ENCODE measurements at regions of chr2 and their contacts with region 1.

Region 1: GRCh38 chr2:33583194-33583938 is 15.7 kb downstream of the FAM98A start:
- DNase-seq: peak; percentile 26
- ATAC-seq: peak; percentile 73
- H3K4me3 ChIP-seq: no peak overlapping the region
- H3K27ac ChIP-seq: 0 out of 2 replicates have a peak overlapping the region, but pooled peaks have one; percentile 6
- H3K4me1 ChIP-seq: peaks cover 3% of the 10 kb centered on the region; the same call in 1 of the 2 replicates
- H3K27me3 ChIP-seq: no peaks in the 10 kb centered on the region
- CTCF ChIP-seq: peak; percentile 72 to 85 (median 83)
- EP300 ChIP-seq: no peak
- POLR2A ChIP-seq: no peak
- RAD21 ChIP-seq: peak; percentile 96

Region 2: DNA sequence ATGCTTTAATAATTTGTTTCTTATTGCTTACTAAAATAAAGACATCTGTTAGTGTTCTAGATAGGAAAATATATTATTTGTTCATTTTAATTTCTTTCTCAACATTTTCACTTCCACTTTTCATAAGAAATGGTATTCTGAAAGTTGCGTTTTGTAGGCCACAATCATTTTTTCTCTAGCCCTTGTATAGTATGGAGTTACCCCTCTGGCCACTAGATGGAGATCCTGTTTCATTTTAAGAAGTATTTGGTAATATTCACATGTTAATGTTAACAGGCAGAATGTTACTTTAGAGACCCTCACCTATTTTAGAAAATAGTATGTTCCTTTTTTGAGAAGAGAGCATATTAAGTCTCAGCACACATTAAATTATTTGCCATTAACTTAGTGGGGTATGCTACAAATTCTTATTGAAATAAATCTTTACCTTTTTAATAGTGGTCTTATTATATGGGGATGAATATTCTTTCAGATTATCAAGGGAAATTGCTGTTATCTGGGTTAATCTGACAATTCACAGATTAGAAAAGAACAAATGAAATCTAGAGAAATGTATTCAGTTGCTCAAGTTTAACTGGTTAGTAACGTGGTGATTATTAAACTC is 1029.4 kb before region 1 on chr2:
- CTCF ChIA-PET with region 1: interaction called, 3 read pairs
- POLR2A ChIA-PET with region 1: no interaction called
- RAD21 ChIA-PET with region 1: interaction called, 3 read pairs
- SMC1A ChIA-PET with region 1: no interaction called
- in situ Hi-C with region 1: no loop called
- intact Hi-C with region 1: loop called (anchors 10 kb)
- DNase-seq: peak; percentile 19
- ATAC-seq: peak; percentile 99
- H3K4me3 ChIP-seq: no peak overlapping the region
- H3K27ac ChIP-seq: no peak overlapping the region
- H3K4me1 ChIP-seq: peaks cover 4% of the 10 kb centered on the region
- H3K27me3 ChIP-seq: no peaks in the 10 kb centered on the region
- CTCF ChIP-seq: peak; percentile 66 to 75 (median 70)
- EP300 ChIP-seq: no peak
- POLR2A ChIP-seq: no peak
- RAD21 ChIP-seq: peak; percentile 76

Region 3: GRCh38 chr2:33275689-33276444 is 307.5 kb before region 1 on chr2:
- CTCF ChIA-PET with region 1: interaction called, 4 read pairs
- POLR2A ChIA-PET with region 1: no interaction called
- RAD21 ChIA-PET with region 1: no interaction called
- SMC1A ChIA-PET with region 1: no interaction called
- in situ Hi-C with region 1: no loop called
- intact Hi-C with region 1: loop called (anchors 10 kb)
- DNase-seq: no peak
- ATAC-seq: no peak
- H3K4me3 ChIP-seq: no peak overlapping the region
- H3K27ac ChIP-seq: no peak overlapping the region
- H3K4me1 ChIP-seq: peaks cover 10% of the 10 kb centered on the region
- H3K27me3 ChIP-seq: 0 out of 4 replicates have a peak, but pooled peaks cover 0 to 2% of the 10 kb centered on the region in 2 experiments
- CTCF ChIP-seq: no peak
- EP300 ChIP-seq: no peak
- POLR2A ChIP-seq: no peak
- RAD21 ChIP-seq: no peak

Region 4: GRCh38 chr2:33395655-33396249 is 187.6 kb before region 1 on chr2:
- CTCF ChIA-PET with region 1: interaction called, 10 read pairs
- POLR2A ChIA-PET with region 1: no interaction called
- RAD21 ChIA-PET with region 1: interaction called, 6 read pairs
- SMC1A ChIA-PET with region 1: interaction called, 9 read pairs
- in situ Hi-C with region 1: no loop called
- intact Hi-C with region 1: no loop called
- DNase-seq: no peak
- ATAC-seq: peak; percentile 71
- H3K4me3 ChIP-seq: no peak overlapping the region
- H3K27ac ChIP-seq: no peak overlapping the region
- H3K4me1 ChIP-seq: no peaks in the 10 kb centered on the region
- H3K27me3 ChIP-seq: no peaks in the 10 kb centered on the region
- CTCF ChIP-seq: peak; percentile 45 to 56 (median 52)
- EP300 ChIP-seq: no peak
- POLR2A ChIP-seq: no peak
- RAD21 ChIP-seq: peak; percentile 60

Region 5: DNA sequence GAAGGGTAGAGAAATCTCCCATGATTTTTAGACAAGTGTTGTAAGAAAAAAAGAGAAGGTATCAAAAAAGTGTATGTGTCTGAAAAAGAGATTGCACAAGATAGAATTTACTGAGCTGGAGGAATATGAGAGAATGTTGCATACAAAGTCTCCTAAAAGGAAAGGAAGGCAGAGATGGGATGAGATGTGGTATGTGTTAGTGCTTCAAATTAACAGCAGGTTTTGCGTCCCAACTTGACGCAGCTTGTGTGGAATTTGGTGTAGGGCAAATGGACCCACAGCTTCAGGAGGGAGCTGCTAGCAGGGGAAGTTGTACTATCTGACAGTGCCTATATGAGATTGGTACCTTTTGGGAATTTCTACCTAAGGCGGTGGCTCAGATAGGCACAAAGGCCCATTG is 116.0 kb before region 1 on chr2:
- CTCF ChIA-PET with region 1: interaction called, 7 read pairs
- POLR2A ChIA-PET with region 1: no interaction called
- RAD21 ChIA-PET with region 1: no interaction called
- SMC1A ChIA-PET with region 1: interaction called, 10 read pairs
- in situ Hi-C with region 1: no loop called
- intact Hi-C with region 1: no loop called
- DNase-seq: no peak
- ATAC-seq: no peak
- H3K4me3 ChIP-seq: no peak overlapping the region
- H3K27ac ChIP-seq: no peak overlapping the region
- H3K4me1 ChIP-seq: no peaks in the 10 kb centered on the region
- H3K27me3 ChIP-seq: no peaks in the 10 kb centered on the region
- CTCF ChIP-seq: no peak
- EP300 ChIP-seq: no peak
- POLR2A ChIP-seq: no peak
- RAD21 ChIP-seq: no peak

Region 6: GRCh38 chr2:33552758-33553461 is 30.5 kb before region 1 on chr2:
- CTCF ChIA-PET with region 1: interaction called, 7 read pairs
- POLR2A ChIA-PET with region 1: no interaction called
- RAD21 ChIA-PET with region 1: no interaction called
- SMC1A ChIA-PET with region 1: interaction called, 11 read pairs
- in situ Hi-C with region 1: no loop called
- intact Hi-C with region 1: no loop called
- DNase-seq: no peak
- ATAC-seq: no peak; the same call in 2 of the 3 replicates
- H3K4me3 ChIP-seq: no peak overlapping the region
- H3K27ac ChIP-seq: no peak overlapping the region
- H3K4me1 ChIP-seq: no peaks in the 10 kb centered on the region
- H3K27me3 ChIP-seq: no peaks in the 10 kb centered on the region
- CTCF ChIP-seq: no peak
- EP300 ChIP-seq: no peak
- POLR2A ChIP-seq: no peak
- RAD21 ChIP-seq: no peak

Measured in GM12878 (cell line).